SK-N-SH (cell line): ENCODE measurements at regions of chr20 and their contacts with region 1.

Region 1: GRCh38 chr20:59441860-59442845 is 141.7 kb downstream of the EDN3 start:
- DNase-seq: peak; percentile 44
- H3K4me3 ChIP-seq: no peak overlapping the region
- H3K27ac ChIP-seq: peak overlapping the region in 1 of 2 experiments; percentile 58; a peak in 1 of 4 replicates
- H3K4me1 ChIP-seq: peaks cover 9 to 50% of the 10 kb centered on the region in 2 experiments; a peak in 3 of 4 replicates
- H3K27me3 ChIP-seq: no peaks in the 10 kb centered on the region
- CTCF ChIP-seq: no peak
- EP300 ChIP-seq: no peak
- RAD21 ChIP-seq: no peak

Region 2: DNA sequence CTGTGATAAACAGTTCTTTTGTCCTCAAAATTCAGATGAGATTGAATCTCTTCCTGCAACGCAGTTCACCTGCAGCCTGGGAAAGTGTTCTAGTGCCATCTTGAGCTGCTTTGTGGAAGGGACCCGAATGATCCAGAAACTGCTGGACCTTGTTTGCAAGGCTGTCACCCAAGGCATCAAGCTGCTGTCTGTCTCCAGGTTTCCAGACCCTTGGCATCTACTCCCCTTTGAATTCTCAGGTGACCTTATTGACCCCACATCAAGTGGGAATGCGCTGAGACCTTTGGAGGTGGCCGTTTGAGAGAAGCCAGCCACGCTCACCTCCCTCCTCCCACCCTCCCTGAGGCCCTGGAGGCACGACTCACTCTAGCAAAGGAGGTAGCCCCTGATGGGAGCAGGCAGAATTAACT is 29.3 kb before region 1 on chr20:
- CTCF ChIA-PET with region 1: interaction called, 11 read pairs
- POLR2A ChIA-PET with region 1: interaction called, 8 read pairs
- DNase-seq: peak; percentile 46
- H3K4me3 ChIP-seq: no peak overlapping the region
- H3K27ac ChIP-seq: peak overlapping the region in 1 of 2 experiments; percentile 80; a peak in 2 of 4 replicates
- H3K4me1 ChIP-seq: peaks cover 0 to 27% of the 10 kb centered on the region in 2 experiments; a peak in 1 of 4 replicates
- H3K27me3 ChIP-seq: 0 out of 2 replicates have a peak, but pooled peaks cover 7% of the 10 kb centered on the region
- CTCF ChIP-seq: no peak
- EP300 ChIP-seq: no peak
- RAD21 ChIP-seq: peak; percentile 64

Region 3: DNA sequence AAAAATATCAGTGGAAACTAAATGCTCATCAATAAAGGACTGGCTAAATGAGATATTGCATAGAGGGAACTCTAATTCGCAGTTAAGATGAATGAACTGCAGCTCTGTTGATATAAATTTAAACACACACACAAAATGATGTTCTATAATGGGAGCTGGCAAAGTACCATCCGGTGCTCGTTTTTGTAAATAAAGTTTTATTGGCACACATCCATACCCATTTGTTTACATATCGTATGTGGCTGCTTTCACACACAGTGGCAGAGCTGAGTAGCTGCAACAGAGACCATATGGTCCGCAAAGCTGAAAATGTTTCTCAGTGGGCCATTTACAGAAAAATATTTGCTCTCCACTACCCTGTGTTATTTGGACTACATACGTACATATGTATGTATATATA is 21.1 kb before region 1 on chr20:
- CTCF ChIA-PET with region 1: interaction called, 10 read pairs
- POLR2A ChIA-PET with region 1: interaction called, 5 read pairs
- DNase-seq: no peak
- H3K4me3 ChIP-seq: no peak overlapping the region
- H3K27ac ChIP-seq: no peak overlapping the region
- H3K4me1 ChIP-seq: peaks cover 0 to 21% of the 10 kb centered on the region in 2 experiments; a peak in 1 of 4 replicates
- H3K27me3 ChIP-seq: peaks cover 7% of the 10 kb centered on the region; the same call in 1 of the 2 replicates
- CTCF ChIP-seq: no peak
- EP300 ChIP-seq: no peak
- RAD21 ChIP-seq: no peak